SK-N-SH (cell line): ENCODE measurements at regions of chr10 and their contacts with region 1.

Region 1: GRCh38 chr10:69092959-69093850 is 5.3 kb downstream of the SRGN start:
- DNase-seq: peak; percentile 65
- H3K4me3 ChIP-seq: peak overlapping the region in 1 of 2 experiments; percentile 50; a peak in 1 of 4 replicates
- H3K27ac ChIP-seq: no peak overlapping the region
- H3K4me1 ChIP-seq: no peaks in the 10 kb centered on the region
- H3K27me3 ChIP-seq: no peaks in the 10 kb centered on the region
- CTCF ChIP-seq: peak; percentile 84
- EP300 ChIP-seq: no peak
- RAD21 ChIP-seq: peak; percentile 89

Region 2: DNA sequence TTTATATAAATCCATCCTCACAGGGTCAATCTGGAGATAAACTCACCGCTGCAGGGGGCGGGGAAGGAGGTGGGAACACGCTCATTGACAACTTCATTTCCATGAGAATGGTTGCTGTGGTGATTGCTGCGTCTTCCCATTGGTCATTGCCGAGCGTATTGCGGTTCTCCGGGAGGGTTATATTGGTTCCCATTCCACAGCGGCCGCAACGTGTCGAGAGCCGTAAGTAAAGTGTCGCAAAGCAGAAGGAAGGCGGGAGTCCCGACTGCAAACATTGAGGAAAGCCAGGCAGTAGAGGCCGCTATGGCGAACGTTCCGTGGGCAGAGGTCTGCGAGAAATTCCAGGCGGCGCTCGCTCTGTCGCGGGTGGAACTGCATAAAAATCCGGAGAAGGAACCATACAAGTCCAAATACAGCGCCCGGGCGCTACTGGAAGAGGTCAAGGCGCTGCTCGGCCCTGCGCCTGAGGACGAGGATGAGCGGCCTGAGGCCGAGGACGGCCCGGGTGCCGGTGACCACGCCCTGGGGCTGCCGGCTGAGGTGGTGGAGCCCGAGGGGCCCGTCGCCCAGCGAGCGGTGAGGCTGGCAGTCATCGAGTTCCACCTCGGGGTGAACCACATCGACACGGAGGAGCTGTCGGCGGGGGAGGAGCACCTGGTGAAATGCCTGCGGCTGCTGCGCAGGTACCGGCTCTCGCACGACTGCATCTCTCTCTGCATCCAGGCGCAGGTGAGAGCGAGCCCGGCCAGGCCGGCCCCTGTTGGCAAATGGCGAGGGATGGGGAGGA is 104.5 kb before region 1 on chr10 and contains the start of gene KIFBP:
- CTCF ChIA-PET with region 1: interaction called, 11 read pairs
- POLR2A ChIA-PET with region 1: no interaction called
- DNase-seq: peak; percentile 92
- H3K4me3 ChIP-seq: peak within 1 kb of the TSS; percentile 78 to 86
- H3K27ac ChIP-seq: peak within 1 kb of the TSS; percentile 71 to 81
- H3K4me1 ChIP-seq: peaks cover 13 to 16% of the 10 kb centered on the region in 2 experiments; a peak in 3 of 4 replicates
- H3K27me3 ChIP-seq: no peaks in the 10 kb centered on the region
- CTCF ChIP-seq: peak; percentile 62
- EP300 ChIP-seq: no peak; a peak in 1 of 4 replicates
- RAD21 ChIP-seq: no peak
- polyA plus RNA-seq, gene KIFBP: 16.9 and 18.3 TPM in 2 replicates

Region 3: GRCh38 chr10:69004821-69005220 is 88.4 kb before region 1 on chr10:
- CTCF ChIA-PET with region 1: interaction called, 15 read pairs
- POLR2A ChIA-PET with region 1: no interaction called
- DNase-seq: peak; percentile 16
- H3K4me3 ChIP-seq: no peak overlapping the region
- H3K27ac ChIP-seq: no peak overlapping the region
- H3K4me1 ChIP-seq: no peaks in the 10 kb centered on the region
- H3K27me3 ChIP-seq: no peaks in the 10 kb centered on the region
- CTCF ChIP-seq: peak; percentile 65
- EP300 ChIP-seq: no peak
- RAD21 ChIP-seq: peak; percentile 60

Region 4: DNA sequence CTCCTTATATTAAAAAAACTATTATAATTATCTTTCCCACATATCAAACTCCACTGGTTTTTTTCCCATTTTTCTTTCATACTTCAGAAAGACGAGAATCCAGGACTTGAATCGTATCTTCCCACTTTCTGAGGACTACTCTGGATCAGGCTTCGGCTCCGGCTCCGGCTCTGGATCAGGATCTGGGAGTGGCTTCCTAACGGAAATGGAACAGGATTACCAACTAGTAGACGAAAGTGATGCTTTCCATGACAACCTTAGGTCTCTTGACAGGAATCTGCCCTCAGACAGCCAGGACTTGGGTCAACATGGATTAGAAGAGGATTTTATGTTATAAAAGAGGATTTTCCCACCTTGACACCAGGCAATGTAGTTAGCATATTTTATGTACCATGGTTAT is 10.6 kb after region 1 on chr10:
- CTCF ChIA-PET with region 1: interaction called, 24 read pairs
- POLR2A ChIA-PET with region 1: no interaction called
- DNase-seq: no peak
- H3K4me3 ChIP-seq: no peak overlapping the region
- H3K27ac ChIP-seq: no peak overlapping the region
- H3K4me1 ChIP-seq: no peaks in the 10 kb centered on the region
- H3K27me3 ChIP-seq: no peaks in the 10 kb centered on the region
- CTCF ChIP-seq: no peak
- EP300 ChIP-seq: no peak
- RAD21 ChIP-seq: no peak